Activated naive CD4-positive, alpha-beta T cell treated with anti-CD3 and anti-CD28 coated beads for 36 hours (primary cell): ENCODE measurements at regions of chr15 and their contacts with region 1.

Region 1: GRCh38 chr15:90869601-90870353 is 1.4 kb downstream of the FURIN start:
- DNase-seq: peak; percentile 87
- H3K4me3 Mint-ChIP-seq: peak overlapping the region; percentile 93
- H3K27ac Mint-ChIP-seq: peak overlapping the region; percentile 99
- H3K4me1 Mint-ChIP-seq: peaks cover 46% of the 10 kb centered on the region
- H3K27me3 Mint-ChIP-seq: no peaks in the 10 kb centered on the region

Region 2: DNA sequence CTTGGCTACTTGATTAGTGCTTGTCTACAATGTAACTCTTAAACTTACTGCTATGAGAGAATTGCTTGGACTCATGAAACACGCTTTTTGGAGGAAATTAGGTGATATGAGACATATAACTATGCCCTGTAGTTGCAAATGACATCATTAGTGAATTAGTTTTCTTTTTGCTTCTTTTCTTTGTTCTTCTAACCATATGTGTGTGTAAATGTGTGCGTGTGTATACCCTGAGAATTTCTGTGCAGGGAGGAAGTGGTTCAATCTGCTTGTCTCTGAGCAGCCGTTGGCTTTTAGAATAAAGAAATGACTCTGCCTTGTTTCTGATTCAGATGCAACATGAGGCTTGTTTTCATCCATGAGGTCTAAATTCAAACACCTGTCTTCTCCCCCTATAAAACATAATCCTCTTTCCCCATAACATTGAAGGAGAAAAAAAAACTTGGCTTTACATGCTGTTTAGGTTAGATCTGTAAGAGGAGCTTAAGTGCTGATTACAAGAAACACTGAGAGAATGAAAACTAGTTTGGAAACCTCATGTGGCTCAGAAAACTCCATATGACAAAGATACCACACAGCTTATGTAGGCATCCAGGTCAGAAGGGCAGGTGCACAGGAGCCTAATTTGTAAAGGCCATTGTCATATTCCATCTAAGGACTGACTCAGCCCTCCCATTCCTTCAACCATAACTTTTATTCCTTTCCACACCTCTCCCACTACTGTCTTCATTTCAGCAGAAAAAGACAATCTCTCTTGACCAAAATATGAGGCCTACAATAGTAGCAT is 183.2 kb before region 1 on chr15:
- CTCF ChIA-PET with region 1: no interaction called
- intact Hi-C with region 1: loop called (anchors 1 kb)
- DNase-seq: peak; percentile 65
- H3K4me3 Mint-ChIP-seq: no peak overlapping the region
- H3K27ac Mint-ChIP-seq: peak overlapping the region; percentile 92
- H3K4me1 Mint-ChIP-seq: peaks cover 24% of the 10 kb centered on the region
- H3K27me3 Mint-ChIP-seq: no peaks in the 10 kb centered on the region

Region 3: DNA sequence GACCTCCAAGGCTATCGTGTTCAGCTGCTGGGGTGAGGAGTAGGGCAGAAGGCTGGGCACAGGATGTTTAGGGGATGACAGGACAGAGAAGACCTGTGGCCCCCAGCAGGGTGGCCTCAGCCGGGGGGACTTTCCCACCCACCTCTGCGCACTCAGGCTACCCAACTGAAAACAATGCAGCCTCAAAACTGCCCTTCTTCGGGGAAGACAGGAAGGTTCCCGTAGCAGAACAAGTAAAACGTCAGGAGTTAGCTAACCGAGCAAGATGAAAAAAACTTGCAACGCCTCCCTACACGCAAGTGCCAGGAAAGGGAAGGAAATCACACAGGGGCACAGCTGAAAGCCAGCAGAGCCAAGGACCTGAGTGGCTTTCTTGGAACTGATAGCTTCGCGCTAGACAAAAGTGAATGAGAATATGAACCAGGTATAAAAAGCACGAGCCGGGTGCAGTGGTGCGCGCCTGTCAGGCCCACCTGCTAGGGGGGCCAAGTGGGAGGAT is 39.8 kb before region 1 on chr15:
- CTCF ChIA-PET with region 1: interaction called, 5 read pairs
- intact Hi-C with region 1: loop called (anchors 1 kb)
- DNase-seq: peak; percentile 94
- H3K4me3 Mint-ChIP-seq: peak overlapping the region; percentile 62
- H3K27ac Mint-ChIP-seq: peak overlapping the region; percentile 100
- H3K4me1 Mint-ChIP-seq: peaks cover 54% of the 10 kb centered on the region
- H3K27me3 Mint-ChIP-seq: no peaks in the 10 kb centered on the region

Region 4: GRCh38 chr15:90851940-90852339 is 17.8 kb before region 1 on chr15:
- CTCF ChIA-PET with region 1: interaction called, 3 read pairs
- intact Hi-C with region 1: loop called (anchors 1 kb)
- DNase-seq: peak; percentile 59
- H3K4me3 Mint-ChIP-seq: peak overlapping the region; percentile 32
- H3K27ac Mint-ChIP-seq: peak overlapping the region; percentile 97
- H3K4me1 Mint-ChIP-seq: peaks cover 65% of the 10 kb centered on the region
- H3K27me3 Mint-ChIP-seq: no peaks in the 10 kb centered on the region